ENCODE measurements at regions of chr5 and their contacts with region 1.

Region 1: DNA sequence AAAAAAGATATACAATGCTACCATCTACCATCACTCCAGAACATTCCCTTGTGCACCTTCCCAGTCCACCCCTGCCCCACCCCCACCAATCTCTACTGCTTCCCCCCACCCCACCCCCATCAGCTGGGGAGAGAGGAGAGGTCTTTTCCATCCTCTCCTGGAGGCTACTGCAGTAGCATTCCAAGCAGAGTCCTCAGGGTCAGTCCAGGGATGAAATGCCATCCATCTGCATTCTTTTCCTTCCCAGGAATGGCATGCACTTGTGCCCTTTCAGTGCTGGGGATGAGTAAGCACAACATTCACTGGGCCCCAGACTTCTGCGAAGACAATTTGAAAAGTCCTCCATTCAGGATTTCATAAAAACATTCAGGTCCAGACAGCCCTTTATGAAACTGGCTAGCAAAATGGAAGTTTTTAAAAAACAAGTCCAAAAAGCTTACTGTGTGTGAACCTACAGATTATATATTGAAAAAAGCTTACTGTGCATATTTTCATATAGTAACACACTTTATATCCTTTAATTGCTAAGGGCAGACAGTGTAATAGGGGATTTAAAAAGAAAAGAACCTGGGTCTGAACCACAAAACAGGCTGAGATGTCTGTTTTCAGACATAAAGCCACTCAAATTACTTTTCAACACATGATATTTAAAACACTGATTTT is 50.0 kb upstream of the GOLPH3 start:
- DNase-seq: no peak
- ATAC-seq: no peak

Region 2: GRCh38 chr5:32174011-32174870 is 49.8 kb before region 1 on chr5 and contains the start of gene GOLPH3:
- intact Hi-C with region 1: loop called in 1 of 2 experiments (anchors 10 kb)
- DNase-seq: peak; percentile 91 to 97
- ATAC-seq: peak; percentile 87
- total RNA-seq, gene GOLPH3: 123 to 131 TPM

Measured in left colon (tissue), 2 donors.